CD8-positive, alpha-beta memory T cell (primary cell): ENCODE measurements at regions of chr11 and their contacts with region 1.

Region 1: DNA sequence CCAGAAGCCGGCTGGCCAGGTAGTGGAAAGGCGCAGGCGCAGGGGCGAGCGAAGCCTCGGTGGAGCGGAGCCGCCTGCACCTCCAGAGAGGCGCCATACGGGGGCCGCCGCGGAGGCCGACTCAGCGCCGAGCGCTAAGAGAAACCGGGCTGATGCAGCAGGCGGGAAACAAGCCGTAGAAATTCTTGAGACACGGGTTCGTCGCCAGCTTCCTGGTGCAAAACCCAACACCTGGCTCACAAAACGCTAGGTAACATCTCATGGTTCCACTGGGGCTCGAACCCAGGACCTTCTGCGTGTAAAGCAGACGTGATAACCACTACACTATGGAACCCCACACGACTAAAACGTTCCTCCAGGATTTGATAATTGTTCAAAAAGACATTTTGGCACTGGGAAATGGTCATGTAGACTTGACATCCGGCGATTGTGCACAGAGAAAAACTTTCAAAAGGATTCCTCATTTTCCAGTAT is 39.1 kb downstream of the OR4D9 start:
- DNase-seq: peak; percentile 67 to 89 (median 82)
- H3K4me3 ChIP-seq: peak overlapping the region; percentile 82
- H3K4me3 Mint-ChIP-seq: peak overlapping the region; percentile 85 to 96 (median 91)
- H3K27ac ChIP-seq: peak overlapping the region; percentile 69
- H3K27ac Mint-ChIP-seq: peak overlapping the region; percentile 72 to 99 (median 88)
- H3K4me1 ChIP-seq: peaks cover 11% of the 10 kb centered on the region
- H3K4me1 Mint-ChIP-seq: peaks cover 26 to 35% (median 33%) of the 10 kb centered on the region in 3 donors
- H3K27me3 ChIP-seq: no peaks in the 10 kb centered on the region
- H3K27me3 Mint-ChIP-seq: peaks cover 0 to 12% of the 10 kb centered on the region in 2 donors

Region 2: DNA sequence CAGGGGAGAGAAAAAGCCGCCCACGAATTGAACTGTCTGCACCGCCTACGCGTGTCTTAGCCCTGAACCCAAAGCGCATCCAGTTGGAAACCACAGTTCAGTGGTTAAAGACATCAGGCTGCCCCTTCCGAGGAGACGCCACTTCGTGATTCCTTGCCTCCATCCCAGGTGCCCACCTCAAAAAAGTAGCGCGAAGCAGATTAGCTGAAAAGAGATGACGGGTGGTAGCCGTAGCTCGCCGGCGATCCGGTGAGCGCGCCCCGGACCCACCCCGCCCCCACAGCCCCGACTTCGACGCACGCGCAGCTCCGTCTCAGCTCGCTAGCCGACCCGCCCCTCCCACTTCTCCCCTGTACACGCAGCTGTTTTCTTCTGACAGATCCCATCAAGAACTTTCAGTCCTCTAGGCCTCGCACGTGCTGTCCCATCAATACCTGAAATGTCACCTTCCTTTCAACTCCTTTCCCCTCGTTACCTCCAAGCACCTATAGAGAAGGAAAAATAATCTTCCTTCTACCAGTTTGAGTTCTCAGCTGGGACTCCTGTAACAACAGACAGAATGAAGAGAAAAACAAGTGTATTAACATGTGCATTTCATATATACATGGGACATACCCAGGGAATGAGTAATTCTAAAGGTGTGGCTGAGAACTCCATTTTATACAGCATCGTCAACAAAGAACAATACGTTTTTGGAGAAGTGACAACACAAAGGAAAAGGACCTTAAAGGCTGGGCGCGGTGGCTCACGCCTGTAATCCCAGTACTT is 10.5 kb after region 1 on chr11:
- CTCF ChIA-PET with region 1: interaction called, 20 read pairs
- POLR2A ChIA-PET with region 1: interaction called, 21 read pairs
- DNase-seq: peak; percentile 72 to 86 (median 74)
- H3K4me3 ChIP-seq: peak overlapping the region; percentile 98
- H3K4me3 Mint-ChIP-seq: peak overlapping the region; percentile 92 to 99 (median 95)
- H3K27ac ChIP-seq: peak overlapping the region; percentile 77
- H3K27ac Mint-ChIP-seq: peak overlapping the region; percentile 92 to 99 (median 96)
- H3K4me1 ChIP-seq: peaks cover 39% of the 10 kb centered on the region
- H3K4me1 Mint-ChIP-seq: peaks cover 42 to 52% (median 51%) of the 10 kb centered on the region in 3 donors
- H3K27me3 ChIP-seq: no peaks in the 10 kb centered on the region
- H3K27me3 Mint-ChIP-seq: peaks cover 0 to 13% of the 10 kb centered on the region in 2 donors

Region 3: DNA sequence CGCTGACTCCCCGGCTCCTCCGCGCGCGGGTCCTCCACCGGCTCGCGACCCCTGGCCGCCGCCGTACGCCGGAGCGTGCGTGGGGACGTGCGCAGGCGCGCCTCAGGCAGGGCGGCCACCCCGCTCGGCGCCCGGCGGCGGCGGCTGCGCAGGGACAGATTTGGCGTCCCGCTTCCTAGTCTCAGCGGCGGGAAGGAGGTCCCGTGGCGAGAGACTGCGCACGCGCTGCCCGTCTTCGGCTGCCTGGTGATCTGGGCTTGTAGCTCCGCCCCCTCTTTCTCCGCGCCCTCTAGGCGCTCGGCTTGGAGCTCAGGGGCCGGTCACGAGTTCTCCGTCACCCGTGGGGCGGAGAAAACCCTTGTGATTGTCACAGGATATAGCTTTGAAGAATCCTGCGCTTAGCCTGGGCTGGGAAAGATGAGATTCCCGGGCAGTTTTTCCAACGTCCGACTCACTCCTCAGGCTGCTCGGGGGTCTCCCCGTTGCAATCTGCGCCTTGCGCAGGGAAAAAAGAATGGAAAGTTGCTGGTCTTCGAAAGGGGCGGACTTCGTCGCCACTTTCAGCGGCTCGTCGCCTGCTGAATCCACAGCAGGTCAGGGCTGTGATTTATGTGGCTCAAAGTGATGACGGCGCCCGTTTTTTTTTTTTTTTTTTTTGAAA is 118.7 kb after region 1 on chr11 and contains the start of gene PATL1:
- CTCF ChIA-PET with region 1: interaction called, 8 read pairs
- POLR2A ChIA-PET with region 1: interaction called, 13 read pairs
- DNase-seq: peak; percentile 99 to 100 (median 99)
- H3K4me3 ChIP-seq: peak within 1 kb of the TSS; percentile 73
- H3K4me3 Mint-ChIP-seq: peak within 1 kb of the TSS; percentile 96 to 99 (median 98)
- H3K27ac ChIP-seq: peak within 1 kb of the TSS; percentile 97
- H3K27ac Mint-ChIP-seq: peak within 1 kb of the TSS; percentile 99 to 100 (median 100)
- H3K4me1 ChIP-seq: peaks cover 23% of the 10 kb centered on the region
- H3K4me1 Mint-ChIP-seq: peaks cover 33 to 52% (median 47%) of the 10 kb centered on the region in 3 donors
- H3K27me3 ChIP-seq: no peaks in the 10 kb centered on the region
- H3K27me3 Mint-ChIP-seq: no peaks in the 10 kb centered on the region
- total RNA-seq, gene PATL1: 61.3 to 65.8 TPM